Activated T-helper 1 cell treated with anti-CD3 and anti-CD28 coated beads, Interleukin-12 subunit alpha, Interleukin-12 subunit beta, Interleukin-2, Interleukin-4 antibody, amounts not matched to agents 30 ng/mL and 10 ng/mL and 1 ng/mL, durations not matched to agents 14 hours and 24 hours and 36 hours (primary cell): ENCODE measurements at regions of chr3 and their contacts with region 1.

Region 1: GRCh38 chr3:88149509-88150362 is at the start of gene C3orf38:
- DNase-seq: peak; percentile 80
- H3K4me3 Mint-ChIP-seq: peak within 1 kb of the TSS; percentile 99
- H3K27ac Mint-ChIP-seq: peak within 1 kb of the TSS; percentile 99
- H3K4me1 Mint-ChIP-seq: peaks cover 40% of the 10 kb centered on the region
- H3K27me3 Mint-ChIP-seq: no peaks in the 10 kb centered on the region
- total RNA-seq, gene C3orf38: 21.5 and 23.7 TPM in 2 replicates

Region 2: GRCh38 chr3:87227104-87227834 is 922.5 kb before region 1 on chr3 and contains the start of gene CHMP2B:
- intact Hi-C with region 1: loop called (anchors 5 kb)
- DNase-seq: peak; percentile 87
- H3K4me3 Mint-ChIP-seq: peak within 1 kb of the TSS; percentile 98
- H3K27ac Mint-ChIP-seq: peak within 1 kb of the TSS; percentile 94
- H3K4me1 Mint-ChIP-seq: peaks cover 31% of the 10 kb centered on the region
- H3K27me3 Mint-ChIP-seq: peaks cover 16% of the 10 kb centered on the region
- total RNA-seq, gene CHMP2B: 28.2 and 29.6 TPM in 2 replicates

Region 3: GRCh38 chr3:87272718-87273341 is 876.9 kb before region 1 on chr3:
- intact Hi-C with region 1: loop called (anchors 5 kb)
- DNase-seq: no peak
- H3K4me3 Mint-ChIP-seq: no peak overlapping the region
- H3K27ac Mint-ChIP-seq: no peak overlapping the region
- H3K4me1 Mint-ChIP-seq: peaks cover 51% of the 10 kb centered on the region
- H3K27me3 Mint-ChIP-seq: peaks cover 2% of the 10 kb centered on the region

Region 4: DNA sequence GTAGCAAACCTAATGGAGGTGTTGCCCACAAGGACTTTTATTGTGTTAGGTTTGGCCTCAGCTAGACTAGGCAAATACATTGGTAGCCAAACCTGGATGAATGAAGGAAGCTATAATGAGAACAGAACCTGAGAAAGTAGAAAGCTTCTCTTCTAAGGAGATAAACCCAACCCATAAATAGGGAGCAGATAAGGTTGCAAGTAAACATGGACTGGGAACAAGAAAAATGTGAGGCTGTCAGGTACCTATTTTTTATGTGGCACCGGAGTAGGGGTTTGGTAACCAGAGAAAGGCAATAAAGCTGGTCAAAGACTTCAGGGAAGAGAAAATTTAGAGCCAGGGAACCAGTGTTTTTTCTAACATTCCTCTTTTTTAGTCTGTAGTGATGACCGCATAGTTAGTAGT is 65.6 kb before region 1 on chr3:
- intact Hi-C with region 1: no loop called
- DNase-seq: no peak
- H3K4me3 Mint-ChIP-seq: no peak overlapping the region
- H3K27ac Mint-ChIP-seq: no peak overlapping the region
- H3K4me1 Mint-ChIP-seq: peaks cover 21% of the 10 kb centered on the region
- H3K27me3 Mint-ChIP-seq: no peaks in the 10 kb centered on the region

Region 5: GRCh38 chr3:88113311-88114162 is 36.2 kb before region 1 on chr3:
- intact Hi-C with region 1: loop called (anchors 2 kb)
- DNase-seq: peak; percentile 44
- H3K4me3 Mint-ChIP-seq: no peak overlapping the region
- H3K27ac Mint-ChIP-seq: no peak overlapping the region
- H3K4me1 Mint-ChIP-seq: peaks cover 17% of the 10 kb centered on the region
- H3K27me3 Mint-ChIP-seq: no peaks in the 10 kb centered on the region

Region 6: DNA sequence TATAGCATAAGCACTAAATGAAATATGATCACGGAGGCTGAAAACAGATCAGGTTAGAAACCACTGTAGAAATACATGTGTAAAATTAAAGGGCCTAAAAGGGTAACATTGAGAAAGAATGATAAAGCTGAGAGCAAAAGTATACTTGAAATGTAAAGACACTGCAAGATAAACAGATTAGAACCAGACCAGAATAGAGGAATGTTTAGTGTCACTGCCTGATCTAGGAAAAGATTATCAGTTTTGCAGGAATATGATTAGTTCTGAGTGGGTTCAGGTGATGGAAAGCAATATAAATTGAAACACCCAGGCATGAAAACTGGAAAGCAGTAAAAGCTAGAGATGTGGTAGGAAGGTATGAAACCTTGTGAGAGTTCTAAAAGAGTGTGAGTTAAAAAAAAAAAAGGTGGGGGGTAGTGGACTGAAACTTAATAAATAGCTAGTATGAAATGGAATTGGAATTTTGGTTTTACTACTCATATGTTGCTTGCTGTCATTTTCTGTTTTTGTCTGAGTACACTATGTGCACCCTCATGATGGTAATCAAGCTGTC is 15.9 kb before region 1 on chr3:
- intact Hi-C with region 1: loop called (anchors 2 kb)
- DNase-seq: no peak
- H3K4me3 Mint-ChIP-seq: no peak overlapping the region
- H3K27ac Mint-ChIP-seq: no peak overlapping the region
- H3K4me1 Mint-ChIP-seq: peaks cover 10% of the 10 kb centered on the region
- H3K27me3 Mint-ChIP-seq: no peaks in the 10 kb centered on the region